PC-3 (cell line): ENCODE measurements at regions of chr5 and their contacts with region 1.

Region 1: DNA sequence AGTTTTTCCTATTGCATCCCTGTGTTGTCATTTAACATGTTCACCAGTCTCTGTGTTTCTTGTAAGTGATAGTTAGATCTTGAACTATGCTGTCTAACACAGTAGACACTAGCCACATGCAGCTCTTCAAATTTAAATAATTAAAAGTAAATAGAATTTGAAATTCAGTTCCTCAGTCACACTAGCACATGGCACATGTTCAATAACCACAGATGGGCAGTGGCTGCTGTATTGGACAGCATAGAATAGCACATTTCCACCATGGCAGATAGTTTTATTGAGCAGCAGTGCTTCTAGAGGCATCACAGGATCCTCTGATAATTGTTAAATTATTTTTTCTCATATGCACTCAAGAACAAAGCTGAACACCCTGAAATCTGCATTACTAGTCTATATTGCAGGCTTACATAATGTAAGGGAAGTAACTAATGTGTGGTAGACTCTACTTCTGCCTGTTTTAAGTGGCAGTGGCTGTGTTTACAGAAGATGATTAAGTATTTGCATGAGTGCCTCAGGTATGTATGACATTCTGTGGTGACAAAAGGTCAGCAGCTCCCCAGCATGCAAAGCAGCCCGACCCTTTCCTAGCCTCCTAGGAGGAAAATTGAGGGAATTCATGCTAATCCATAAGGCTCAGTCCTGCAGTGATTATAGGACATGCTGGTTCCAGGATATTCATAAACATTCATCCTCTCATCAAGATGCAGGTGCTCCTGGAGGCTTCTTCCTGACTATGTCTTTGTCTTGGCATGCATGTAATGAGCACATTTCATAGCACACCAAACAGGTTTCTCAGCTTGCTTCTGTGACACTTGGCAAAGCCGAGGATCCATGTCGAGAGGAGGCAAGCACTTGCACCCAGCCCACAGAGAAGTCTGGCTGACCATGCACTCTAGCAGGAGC is 45.5 kb downstream of the SH3RF2 start:
- DNase-seq: peak; percentile 83
- ATAC-seq: peak; percentile 87
- H3K4me3 ChIP-seq: no peak overlapping the region; the same call in 1 of the 2 replicates
- H3K27ac ChIP-seq: peak overlapping the region; percentile 75
- H3K4me1 ChIP-seq: peaks cover 41% of the 10 kb centered on the region
- H3K27me3 ChIP-seq: no peaks in the 10 kb centered on the region
- CTCF ChIP-seq: no peak

Region 2: GRCh38 chr5:145925353-145925752 is 56.5 kb before region 1 on chr5:
- CTCF ChIA-PET with region 1: no interaction called
- POLR2A ChIA-PET with region 1: no interaction called
- intact Hi-C with region 1: no loop called
- DNase-seq: peak; percentile 83
- ATAC-seq: peak; percentile 96
- H3K4me3 ChIP-seq: no peak overlapping the region
- H3K27ac ChIP-seq: no peak overlapping the region
- H3K4me1 ChIP-seq: peaks cover 18% of the 10 kb centered on the region
- H3K27me3 ChIP-seq: no peaks in the 10 kb centered on the region
- CTCF ChIP-seq: no peak

Region 3: DNA sequence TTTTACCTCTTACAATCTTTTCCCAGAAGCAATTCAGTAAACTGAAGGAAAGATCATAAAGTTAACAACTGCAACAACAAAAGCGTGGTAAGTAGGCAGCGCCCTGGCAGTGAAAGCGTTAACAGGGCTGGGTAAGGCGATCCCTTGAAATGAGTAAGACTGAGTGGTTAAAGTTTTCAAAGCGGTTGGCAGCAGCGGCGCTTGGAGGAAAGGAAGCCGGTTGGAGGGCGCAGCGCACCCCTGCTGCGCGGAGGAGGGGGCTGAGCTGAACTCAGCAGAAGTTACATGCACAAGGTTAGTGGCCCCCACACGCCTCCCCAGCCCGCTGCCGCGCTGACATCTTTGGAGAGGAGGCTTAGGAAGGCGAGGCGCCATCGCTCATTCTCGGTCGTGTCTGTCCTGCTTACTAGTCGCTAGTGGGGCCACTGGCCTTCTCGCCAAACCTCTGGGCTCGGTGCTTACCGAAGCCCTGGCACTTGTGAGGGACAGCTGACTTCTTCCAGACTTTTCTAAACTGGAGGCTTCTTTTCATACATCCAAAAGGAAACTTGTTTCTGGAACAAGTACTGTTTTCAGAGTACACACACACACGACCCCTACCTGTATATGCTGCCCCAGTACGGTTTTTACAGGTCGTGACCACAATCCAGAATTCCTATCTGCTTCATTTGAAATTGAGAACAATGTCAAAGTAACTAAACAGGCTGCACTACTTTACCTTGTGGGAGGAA is 45.3 kb before region 1 on chr5 and contains the start of gene SH3RF2:
- CTCF ChIA-PET with region 1: no interaction called
- POLR2A ChIA-PET with region 1: no interaction called
- intact Hi-C with region 1: loop called (anchors 2 kb)
- DNase-seq: peak; percentile 75
- ATAC-seq: peak; percentile 79
- H3K4me3 ChIP-seq: peak within 1 kb of the TSS; percentile 86
- H3K27ac ChIP-seq: peak within 1 kb of the TSS; percentile 70
- H3K4me1 ChIP-seq: peaks cover 40% of the 10 kb centered on the region
- H3K27me3 ChIP-seq: no peaks in the 10 kb centered on the region
- CTCF ChIP-seq: no peak
- total RNA-seq, gene SH3RF2: 5.9 and 6.2 TPM in 2 replicates

Region 4: GRCh38 chr5:145953202-145953601 is 28.6 kb before region 1 on chr5:
- CTCF ChIA-PET with region 1: no interaction called
- POLR2A ChIA-PET with region 1: no interaction called
- intact Hi-C with region 1: loop called (anchors 1 kb)
- DNase-seq: no peak
- ATAC-seq: no peak
- H3K4me3 ChIP-seq: no peak overlapping the region
- H3K27ac ChIP-seq: no peak overlapping the region
- H3K4me1 ChIP-seq: no peaks in the 10 kb centered on the region
- H3K27me3 ChIP-seq: no peaks in the 10 kb centered on the region
- CTCF ChIP-seq: no peak

Region 5: GRCh38 chr5:146007270-146007669 is 25.4 kb after region 1 on chr5:
- CTCF ChIA-PET with region 1: no interaction called
- POLR2A ChIA-PET with region 1: no interaction called
- intact Hi-C with region 1: no loop called
- DNase-seq: peak; percentile 22
- ATAC-seq: peak; percentile 68
- H3K4me3 ChIP-seq: no peak overlapping the region
- H3K27ac ChIP-seq: no peak overlapping the region
- H3K4me1 ChIP-seq: no peaks in the 10 kb centered on the region
- H3K27me3 ChIP-seq: no peaks in the 10 kb centered on the region
- CTCF ChIP-seq: peak; percentile 44

Region 6: DNA sequence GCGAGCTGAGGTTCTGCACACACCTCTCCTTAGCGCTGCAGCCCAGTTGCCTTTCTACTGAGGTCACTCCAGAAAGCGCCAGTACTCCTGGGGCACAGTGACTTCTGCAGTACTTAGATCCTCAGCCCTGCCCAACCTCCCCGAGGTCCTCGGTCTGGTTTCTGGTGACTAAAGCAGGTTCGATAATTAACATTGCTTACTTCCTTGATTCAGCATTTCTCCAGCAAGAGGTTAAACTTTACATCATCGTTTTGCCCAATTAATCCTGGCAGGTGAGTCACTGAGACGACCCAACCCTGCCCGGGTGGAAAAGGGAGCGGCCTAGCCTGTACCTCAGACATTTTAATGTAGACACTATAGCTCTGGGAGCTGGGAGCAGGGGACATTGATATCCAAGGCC is 45.9 kb after region 1 on chr5:
- CTCF ChIA-PET with region 1: no interaction called
- POLR2A ChIA-PET with region 1: no interaction called
- intact Hi-C with region 1: loop called (anchors 5 kb)
- DNase-seq: peak; percentile 96
- ATAC-seq: peak; percentile 99
- H3K4me3 ChIP-seq: 0 out of 2 replicates have a peak overlapping the region, but pooled peaks have one; percentile 2
- H3K27ac ChIP-seq: peak overlapping the region; percentile 59
- H3K4me1 ChIP-seq: peaks cover 21% of the 10 kb centered on the region
- H3K27me3 ChIP-seq: no peaks in the 10 kb centered on the region
- CTCF ChIP-seq: no peak

Region 7: DNA sequence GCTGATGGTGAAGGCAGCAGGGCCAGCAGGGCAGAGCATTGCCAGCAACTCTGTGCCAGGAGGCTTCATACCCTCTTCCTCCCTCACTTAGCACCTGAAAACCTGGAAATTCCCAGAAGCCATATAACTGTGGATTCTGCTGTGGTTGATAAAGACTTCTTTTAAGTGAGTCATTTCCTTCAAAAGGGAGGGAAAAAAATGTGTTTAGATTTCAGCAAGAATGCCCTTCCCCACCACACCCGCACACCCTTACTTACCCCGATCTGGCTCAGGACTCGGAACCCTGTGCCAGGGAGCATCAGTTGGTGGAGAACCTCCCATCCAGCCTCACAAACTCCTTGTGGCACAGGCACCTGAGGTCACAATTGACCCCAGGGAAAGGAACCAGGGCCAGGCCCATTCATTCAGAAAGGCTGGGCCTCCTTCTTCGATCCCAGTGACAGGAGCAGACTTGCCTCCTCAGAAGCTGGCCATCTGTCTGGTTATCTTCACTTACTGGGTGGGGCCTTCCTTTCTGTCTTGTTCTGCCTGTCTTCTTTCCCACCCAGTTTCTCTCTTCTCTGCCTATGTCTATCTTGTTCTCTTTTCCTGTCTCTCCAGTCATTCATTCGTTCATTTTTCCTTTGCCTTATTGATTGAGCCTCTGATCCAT is 60.9 kb after region 1 on chr5:
- CTCF ChIA-PET with region 1: no interaction called
- POLR2A ChIA-PET with region 1: no interaction called
- intact Hi-C with region 1: loop called (anchors 2 kb)
- DNase-seq: peak; percentile 92
- ATAC-seq: peak; percentile 85
- H3K4me3 ChIP-seq: no peak overlapping the region
- H3K27ac ChIP-seq: peak overlapping the region; percentile 56
- H3K4me1 ChIP-seq: peaks cover 27% of the 10 kb centered on the region
- H3K27me3 ChIP-seq: no peaks in the 10 kb centered on the region
- CTCF ChIP-seq: no peak

Region 8: GRCh38 chr5:146052780-146053179 is 70.9 kb after region 1 on chr5:
- CTCF ChIA-PET with region 1: no interaction called
- POLR2A ChIA-PET with region 1: no interaction called
- intact Hi-C with region 1: no loop called
- DNase-seq: peak; percentile 48
- ATAC-seq: peak; percentile 44
- H3K4me3 ChIP-seq: no peak overlapping the region
- H3K27ac ChIP-seq: no peak overlapping the region
- H3K4me1 ChIP-seq: peaks cover 9% of the 10 kb centered on the region; the same call in 1 of the 2 replicates
- H3K27me3 ChIP-seq: peaks cover 21% of the 10 kb centered on the region; the same call in 1 of the 2 replicates
- CTCF ChIP-seq: peak; percentile 81

Region 9: GRCh38 chr5:146516151-146516475 is 534.3 kb after region 1 on chr5 and contains the start of gene GPR151:
- CTCF ChIA-PET with region 1: no interaction called
- POLR2A ChIA-PET with region 1: no interaction called
- intact Hi-C with region 1: no loop called
- DNase-seq: no peak
- ATAC-seq: peak; percentile 25; the same call in 1 of the 2 replicates
- H3K4me3 ChIP-seq: no peak within 1 kb of the TSS
- H3K27ac ChIP-seq: no peak within 1 kb of the TSS
- H3K4me1 ChIP-seq: peaks cover 3% of the 10 kb centered on the region; the same call in 1 of the 2 replicates
- H3K27me3 ChIP-seq: no peaks in the 10 kb centered on the region
- CTCF ChIP-seq: no peak
- total RNA-seq, gene GPR151: not detected in 2 replicates